Spleen (tissue), 13 donors: ENCODE measurements at regions of chr4 and their contacts with region 1.

Region 1: DNA sequence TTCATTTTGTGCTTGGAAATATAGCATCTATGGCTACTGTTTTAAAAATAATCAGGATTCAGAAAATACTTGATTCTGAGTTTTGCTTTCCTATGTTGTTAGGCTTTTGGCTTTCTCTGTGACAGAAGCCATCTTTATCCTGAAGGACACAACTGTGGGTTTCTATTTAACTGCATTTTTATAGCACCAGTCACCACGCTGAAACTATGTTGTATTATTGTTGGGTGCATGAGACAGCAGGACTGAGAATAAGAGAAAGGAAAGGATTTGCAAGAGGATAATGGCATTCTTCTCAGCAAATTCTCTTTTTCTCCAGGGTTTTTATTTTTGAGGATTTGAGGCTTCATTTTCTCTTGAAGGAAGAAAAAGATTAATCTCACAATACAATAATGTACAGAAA is 10.1 kb upstream of the NEUROG2 start:
- DNase-seq: no peak
- H3K4me3 ChIP-seq: no peak overlapping the region
- H3K27ac ChIP-seq: no peak overlapping the region
- H3K4me1 ChIP-seq: peaks cover 5 to 34% (median 21%) of the 10 kb centered on the region in 6 donors
- H3K27me3 ChIP-seq: peaks cover 15 to 59% (median 31%) of the 10 kb centered on the region in 7 donors
- CTCF ChIP-seq: no peak
- POLR2A ChIP-seq: no peak

Region 2: DNA sequence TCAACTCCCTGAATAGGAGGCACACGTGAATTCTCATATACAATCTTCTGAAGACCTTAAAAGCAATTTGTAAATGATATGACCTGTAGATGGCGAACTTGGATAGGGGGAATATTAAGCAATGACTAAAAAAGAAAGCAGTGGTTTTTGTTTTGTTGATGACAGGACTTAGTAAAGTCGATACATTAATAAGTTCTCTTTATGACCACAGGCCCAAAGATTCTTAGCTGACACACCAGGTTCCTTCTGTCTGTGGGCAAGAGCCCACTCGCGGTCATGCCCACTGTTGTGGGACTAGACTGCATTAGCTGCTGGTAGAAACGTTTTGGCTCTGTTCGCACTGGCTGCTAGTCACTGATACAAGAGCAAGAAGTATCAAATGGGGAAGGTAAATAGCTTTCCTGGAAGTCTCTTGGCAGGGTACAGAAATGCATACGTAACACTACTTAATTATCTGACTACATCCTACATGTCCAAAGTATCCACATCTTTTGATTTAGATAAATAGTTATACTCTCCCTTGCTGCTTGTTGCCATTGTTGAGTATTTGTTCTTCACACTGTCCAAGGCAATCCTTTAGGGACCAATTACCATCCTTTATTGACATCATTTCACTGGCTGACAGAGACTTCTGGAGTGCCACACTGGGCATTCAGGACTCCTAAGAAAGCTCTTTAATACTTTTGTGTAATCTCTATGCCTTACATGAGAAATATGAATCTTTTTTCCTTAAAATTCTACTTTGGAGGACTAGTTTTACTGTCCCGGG is 197.9 kb before region 1 on chr4:
- intact Hi-C with region 1: loop called (anchors 5 kb)
- DNase-seq: peak; percentile 62
- H3K4me3 ChIP-seq: no peak overlapping the region
- H3K27ac ChIP-seq: no peak overlapping the region
- H3K4me1 ChIP-seq: peaks cover 0 to 6% (median 0%) of the 10 kb centered on the region in 6 donors
- H3K27me3 ChIP-seq: no peaks in the 10 kb centered on the region
- CTCF ChIP-seq: peak in 6 of 11 experiments; percentile 24 to 54 (median 39)
- POLR2A ChIP-seq: no peak

Region 3: GRCh38 chr4:112693507-112693906 is 167.4 kb after region 1 on chr4:
- intact Hi-C with region 1: no loop called
- DNase-seq: no peak
- H3K4me3 ChIP-seq: no peak overlapping the region
- H3K27ac ChIP-seq: no peak overlapping the region
- H3K4me1 ChIP-seq: no peaks in the 10 kb centered on the region
- H3K27me3 ChIP-seq: peaks cover 0 to 5% (median 0%) of the 10 kb centered on the region in 7 donors
- CTCF ChIP-seq: no peak
- POLR2A ChIP-seq: no peak